ENCODE measurements at regions of chr14 and their contacts with region 1.

Region 1: GRCh38 chr14:104976198-104977007 is 1.8 kb downstream of the AHNAK2 start:
- DNase-seq: peak; percentile 64 to 90
- ATAC-seq: peak in 1 of 2 experiments; percentile 56; a peak in 3 of 6 replicates
- H3K4me3 ChIP-seq: peak overlapping the region; percentile 63
- H3K27ac ChIP-seq: peak overlapping the region; percentile 97 to 99
- H3K4me1 ChIP-seq: peaks cover 81% of the 10 kb centered on the region
- CTCF ChIP-seq: peak; percentile 91
- EP300 ChIP-seq: no peak
- POLR2A ChIP-seq: 0 out of 2 replicates have a peak, but pooled peaks have one; percentile 21
- RAD21 ChIP-seq: peak; percentile 87 to 92

Region 2: DNA sequence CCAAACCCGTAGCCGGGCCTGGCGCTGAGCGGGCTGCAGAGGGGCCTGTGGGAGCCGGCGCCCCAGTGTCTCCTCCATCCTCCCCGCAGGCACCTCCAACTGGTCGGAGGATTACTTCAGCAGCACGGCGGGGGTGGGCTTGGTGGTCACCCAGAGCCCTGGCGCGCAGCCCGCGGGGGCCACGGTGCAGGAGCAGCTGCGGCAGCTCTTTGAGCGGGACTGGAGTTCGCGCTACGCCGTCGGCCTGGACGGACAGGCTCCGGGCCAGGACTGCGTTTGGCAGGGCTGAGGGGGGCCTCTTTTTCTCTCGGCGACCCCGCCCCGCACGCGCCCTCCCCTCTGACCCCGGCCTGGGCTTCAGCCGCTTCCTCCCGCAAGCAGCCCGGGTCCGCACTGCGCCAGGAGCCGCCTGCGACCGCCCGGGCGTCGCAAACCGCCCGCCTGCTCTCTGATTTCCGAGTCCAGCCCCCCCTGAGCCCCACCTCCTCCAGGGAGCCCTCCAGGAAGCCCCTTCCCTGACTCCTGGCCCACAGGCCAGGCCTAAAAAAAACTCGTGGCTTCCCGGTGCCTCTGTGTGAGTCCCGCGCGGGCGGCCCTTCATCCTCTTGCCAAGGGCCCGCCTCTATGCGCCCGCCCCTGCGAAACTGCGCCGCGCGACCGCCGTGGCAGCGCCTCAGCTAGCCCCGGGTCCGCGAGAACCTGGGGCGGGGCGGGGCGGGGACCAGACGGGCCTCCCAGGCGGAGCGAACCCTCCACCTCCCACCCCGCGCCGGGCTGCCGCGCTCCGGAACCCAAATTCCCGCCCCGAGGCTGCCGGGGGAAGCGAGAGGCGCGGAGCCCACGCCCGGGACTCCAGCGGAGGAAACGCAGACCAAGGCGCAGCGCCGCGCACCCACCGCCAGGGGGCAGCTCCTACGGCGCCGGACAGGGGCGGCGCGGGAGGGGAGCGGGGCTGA is 43.4 kb before region 1 on chr14:
- CTCF ChIA-PET with region 1: interaction called, 54 read pairs
- POLR2A ChIA-PET with region 1: interaction called, 9 read pairs
- DNase-seq: peak; percentile 79 to 89
- ATAC-seq: peak; percentile 57 to 80
- H3K4me3 ChIP-seq: peak overlapping the region; percentile 48
- H3K27ac ChIP-seq: peak overlapping the region; percentile 79 to 92
- H3K4me1 ChIP-seq: peaks cover 7% of the 10 kb centered on the region; the same call in 1 of the 3 replicates
- CTCF ChIP-seq: peak; percentile 71
- EP300 ChIP-seq: no peak
- POLR2A ChIP-seq: no peak
- RAD21 ChIP-seq: peak; percentile 43 to 76; a peak in 4 of 5 replicates

Region 3: DNA sequence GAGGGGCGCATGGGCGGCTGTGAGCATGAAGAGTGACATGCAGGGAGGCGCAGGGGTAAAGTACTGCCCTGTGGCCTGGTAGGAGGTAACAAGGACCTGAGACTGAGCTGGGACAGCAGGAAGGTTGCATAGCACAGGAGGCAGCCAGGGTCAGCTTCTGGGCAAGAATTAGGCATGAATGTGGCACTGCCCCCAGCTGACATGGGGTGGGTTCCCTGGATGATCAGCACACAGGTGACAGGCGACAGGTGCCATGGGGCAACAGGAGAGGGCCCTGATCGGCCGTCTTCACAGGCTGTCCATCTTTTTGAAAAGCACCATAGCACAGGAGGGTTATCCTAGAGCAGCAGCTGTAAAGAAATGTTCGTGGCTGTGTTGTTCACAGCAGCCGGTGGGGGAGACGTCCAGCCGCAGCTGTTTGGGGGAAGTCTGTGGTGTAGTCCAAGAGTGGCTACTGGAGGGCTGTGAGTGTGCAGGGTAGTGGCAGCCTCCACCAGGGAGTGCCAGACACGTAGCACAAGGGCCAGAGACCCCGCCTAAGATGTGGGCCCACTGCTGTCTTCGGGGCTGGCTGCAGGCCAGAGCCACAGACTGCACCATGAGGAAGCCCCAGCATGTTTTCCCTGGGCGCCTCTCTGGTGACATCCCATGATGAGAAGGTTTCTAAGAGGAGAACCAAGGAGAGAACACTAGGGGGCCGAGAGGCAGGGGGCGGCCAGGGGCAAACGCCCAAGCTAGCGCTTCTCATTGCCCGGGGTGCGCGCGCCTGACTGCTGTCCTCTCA is 17.6 kb after region 1 on chr14:
- CTCF ChIA-PET with region 1: interaction called, 28 read pairs
- POLR2A ChIA-PET with region 1: no interaction called
- DNase-seq: no peak
- ATAC-seq: peak; percentile 33 to 37; a peak in 3 of 6 replicates
- H3K4me3 ChIP-seq: no peak overlapping the region
- H3K27ac ChIP-seq: no peak overlapping the region
- H3K4me1 ChIP-seq: no peaks in the 10 kb centered on the region
- CTCF ChIP-seq: no peak
- EP300 ChIP-seq: no peak
- POLR2A ChIP-seq: no peak
- RAD21 ChIP-seq: no peak

Region 4: DNA sequence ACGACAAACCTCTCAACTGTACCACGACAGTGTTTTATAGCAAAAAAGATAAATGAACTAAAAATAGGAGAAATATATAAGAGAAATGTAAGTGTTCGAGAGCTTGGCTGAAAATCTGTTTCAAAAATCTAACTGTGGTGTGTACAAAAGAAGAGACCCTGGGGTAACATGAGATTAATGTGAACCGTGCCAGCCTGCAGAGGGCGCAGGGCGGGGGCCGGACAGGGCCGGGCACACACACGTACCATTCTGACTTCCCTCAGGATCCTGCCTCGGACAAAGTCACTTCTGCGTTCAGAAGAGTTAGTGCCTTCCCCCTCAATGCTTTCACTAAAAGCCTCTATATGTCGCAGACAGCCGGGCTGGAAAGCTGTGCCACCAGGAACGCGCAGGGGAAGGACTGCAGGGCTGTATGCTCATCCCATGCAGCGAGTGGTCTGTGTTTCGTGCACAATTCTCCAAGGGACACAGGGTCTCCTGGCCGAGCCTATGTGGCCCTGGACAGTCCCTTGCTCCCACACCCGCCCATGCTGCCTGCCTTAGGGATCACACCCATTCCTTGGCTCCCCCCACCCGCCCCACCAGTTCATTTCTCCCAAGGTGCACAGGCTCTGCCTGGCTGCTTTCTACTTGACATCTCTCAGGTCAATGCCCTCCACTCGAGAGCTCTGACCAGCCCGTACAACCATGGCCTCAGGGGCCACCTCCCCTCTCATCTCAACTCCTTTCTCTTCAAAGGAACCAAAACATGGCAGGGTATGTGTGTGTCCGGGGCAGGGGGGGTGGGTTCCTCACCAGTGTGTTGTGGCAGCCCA is 36.0 kb after region 1 on chr14:
- CTCF ChIA-PET with region 1: interaction called, 81 read pairs
- POLR2A ChIA-PET with region 1: no interaction called
- DNase-seq: peak; percentile 49 to 66
- ATAC-seq: peak; percentile 86 to 90
- H3K4me3 ChIP-seq: no peak overlapping the region
- H3K27ac ChIP-seq: peak overlapping the region in 1 of 2 experiments; percentile 24; a peak in 1 of 6 replicates
- H3K4me1 ChIP-seq: peaks cover 50% of the 10 kb centered on the region
- CTCF ChIP-seq: peak; percentile 73
- EP300 ChIP-seq: no peak
- POLR2A ChIP-seq: no peak
- RAD21 ChIP-seq: peak; percentile 53 to 61

Region 5: GRCh38 chr14:105026803-105027563 is 50.6 kb after region 1 on chr14:
- CTCF ChIA-PET with region 1: interaction called, 68 read pairs
- POLR2A ChIA-PET with region 1: interaction called, 76 read pairs
- DNase-seq: peak in 1 of 2 experiments; percentile 85
- ATAC-seq: peak in 1 of 2 experiments; percentile 29; a peak in 3 of 6 replicates
- H3K4me3 ChIP-seq: no peak overlapping the region
- H3K27ac ChIP-seq: peak overlapping the region; percentile 93 to 97
- H3K4me1 ChIP-seq: peaks cover 51% of the 10 kb centered on the region
- CTCF ChIP-seq: no peak
- EP300 ChIP-seq: no peak
- POLR2A ChIP-seq: no peak
- RAD21 ChIP-seq: no peak

Region 6: DNA sequence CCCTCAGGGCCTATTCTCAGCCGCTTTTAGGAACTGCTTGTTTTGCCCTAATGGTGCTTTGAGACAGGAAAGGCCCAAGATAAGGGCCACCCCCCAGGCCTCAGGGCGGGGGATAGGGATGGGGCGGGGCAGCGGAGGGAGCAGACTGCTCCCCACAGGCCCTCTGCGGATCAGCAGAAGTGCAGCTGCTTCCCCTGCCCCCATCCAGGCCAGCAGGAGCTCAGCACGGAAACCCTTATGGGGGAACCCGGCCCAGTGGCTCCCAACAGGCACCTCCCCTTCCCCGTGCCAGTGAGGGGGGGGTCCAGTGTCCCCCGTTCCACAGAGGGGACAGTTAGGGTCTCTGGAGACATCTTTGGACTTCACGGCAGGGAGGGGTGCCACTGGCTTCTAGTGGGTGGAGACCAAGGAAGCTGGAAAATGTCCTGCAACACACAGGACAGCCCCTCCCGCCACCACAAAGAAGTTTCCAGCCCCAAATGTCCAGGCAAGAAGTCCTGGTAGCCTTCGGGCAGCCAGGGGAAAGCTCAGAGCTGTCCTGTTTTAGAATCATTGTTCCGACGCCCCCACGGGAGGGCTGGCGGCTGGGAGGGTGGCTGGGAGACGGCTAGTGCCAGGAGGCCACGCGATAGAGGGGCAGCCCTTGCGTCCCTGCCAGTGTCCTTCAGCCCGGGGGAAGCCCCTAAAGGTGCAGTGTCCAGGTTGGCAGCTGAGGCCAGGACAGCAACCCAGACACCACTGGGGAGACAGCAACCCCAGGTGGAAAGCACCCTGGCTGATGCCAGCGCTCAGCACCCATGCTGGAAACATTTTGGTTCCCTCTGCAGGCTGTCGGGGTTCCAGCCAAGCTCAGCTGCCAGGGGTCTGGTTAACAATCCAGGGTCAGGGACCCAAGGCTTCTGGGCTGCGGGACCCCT is 99.2 kb after region 1 on chr14:
- CTCF ChIA-PET with region 1: interaction called, 16 read pairs
- POLR2A ChIA-PET with region 1: no interaction called
- DNase-seq: no peak
- ATAC-seq: peak; percentile 5; a peak in 2 of 6 replicates
- H3K4me3 ChIP-seq: no peak overlapping the region
- H3K27ac ChIP-seq: peak overlapping the region in 1 of 2 experiments; percentile 50; a peak in 3 of 6 replicates
- H3K4me1 ChIP-seq: peaks cover 6% of the 10 kb centered on the region; the same call in 1 of the 3 replicates
- CTCF ChIP-seq: no peak
- EP300 ChIP-seq: no peak
- POLR2A ChIP-seq: no peak
- RAD21 ChIP-seq: no peak

Measured in A549 (cell line).